ENCODE measurements at regions of chr6 and their contacts with region 1.

Region 1: GRCh38 chr6:129893640-129894039 is 32.5 kb upstream of the TMEM244 start:
- DNase-seq: no peak
- H3K4me3 ChIP-seq: no peak overlapping the region
- CTCF ChIP-seq: peak; percentile 9

Region 2: DNA sequence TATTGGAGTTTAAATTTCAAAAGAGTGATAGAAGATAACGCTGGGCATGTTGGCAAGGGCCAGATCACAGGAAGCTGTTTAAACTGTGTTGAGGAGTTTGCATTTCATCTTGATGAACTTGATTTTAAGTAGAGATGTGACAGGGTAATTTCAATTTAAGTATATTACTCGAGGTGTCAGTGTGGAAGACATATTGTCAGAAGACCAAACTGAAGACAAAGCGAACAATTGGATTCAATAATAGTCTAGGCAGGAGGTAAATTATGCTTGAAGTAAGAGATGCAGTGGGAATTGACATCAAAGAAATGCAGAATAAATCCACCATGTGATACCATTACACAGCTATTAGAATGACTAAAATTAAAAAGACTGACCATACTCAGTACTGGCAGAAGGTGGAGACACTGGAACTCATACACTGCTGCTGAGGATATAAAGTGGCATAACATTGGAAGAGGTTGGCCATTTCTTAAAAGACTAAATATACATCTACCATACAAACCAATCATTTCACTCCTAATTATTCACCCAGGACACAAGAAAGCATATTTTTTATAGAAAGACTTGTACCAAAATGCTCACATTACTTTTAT is 424.5 kb before region 1 on chr6:
- CTCF ChIA-PET with region 1: no interaction called
- POLR2A ChIA-PET with region 1: no interaction called
- DNase-seq: no peak
- H3K4me3 ChIP-seq: no peak overlapping the region
- CTCF ChIP-seq: no peak

Region 3: GRCh38 chr6:129575378-129576118 is 318.1 kb before region 1 on chr6:
- CTCF ChIA-PET with region 1: no interaction called
- POLR2A ChIA-PET with region 1: no interaction called
- DNase-seq: peak; percentile 19
- H3K4me3 ChIP-seq: no peak overlapping the region
- CTCF ChIP-seq: peak; percentile 52

Region 4: DNA sequence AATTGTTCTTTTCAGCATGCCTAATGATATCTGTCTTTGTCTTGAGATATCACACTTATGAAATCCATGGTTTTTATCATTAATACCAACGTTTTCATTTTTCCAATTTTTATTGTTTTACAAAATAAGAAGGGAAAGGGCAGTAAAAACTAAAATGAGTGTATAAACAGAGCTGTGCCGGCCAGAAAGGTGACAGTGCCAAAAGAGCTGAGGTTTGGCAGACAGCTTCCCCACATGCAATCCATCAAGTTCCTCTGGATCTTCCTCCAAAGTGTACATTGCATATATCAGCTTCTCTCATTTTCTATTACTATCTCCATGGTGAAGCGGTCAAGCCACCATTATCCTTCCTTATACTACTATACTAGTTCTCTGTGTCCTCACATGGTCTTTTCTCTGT is 22.4 kb before region 1 on chr6:
- CTCF ChIA-PET with region 1: interaction called, 13 read pairs
- POLR2A ChIA-PET with region 1: no interaction called
- DNase-seq: no peak
- H3K4me3 ChIP-seq: no peak overlapping the region
- CTCF ChIP-seq: no peak

Region 5: DNA sequence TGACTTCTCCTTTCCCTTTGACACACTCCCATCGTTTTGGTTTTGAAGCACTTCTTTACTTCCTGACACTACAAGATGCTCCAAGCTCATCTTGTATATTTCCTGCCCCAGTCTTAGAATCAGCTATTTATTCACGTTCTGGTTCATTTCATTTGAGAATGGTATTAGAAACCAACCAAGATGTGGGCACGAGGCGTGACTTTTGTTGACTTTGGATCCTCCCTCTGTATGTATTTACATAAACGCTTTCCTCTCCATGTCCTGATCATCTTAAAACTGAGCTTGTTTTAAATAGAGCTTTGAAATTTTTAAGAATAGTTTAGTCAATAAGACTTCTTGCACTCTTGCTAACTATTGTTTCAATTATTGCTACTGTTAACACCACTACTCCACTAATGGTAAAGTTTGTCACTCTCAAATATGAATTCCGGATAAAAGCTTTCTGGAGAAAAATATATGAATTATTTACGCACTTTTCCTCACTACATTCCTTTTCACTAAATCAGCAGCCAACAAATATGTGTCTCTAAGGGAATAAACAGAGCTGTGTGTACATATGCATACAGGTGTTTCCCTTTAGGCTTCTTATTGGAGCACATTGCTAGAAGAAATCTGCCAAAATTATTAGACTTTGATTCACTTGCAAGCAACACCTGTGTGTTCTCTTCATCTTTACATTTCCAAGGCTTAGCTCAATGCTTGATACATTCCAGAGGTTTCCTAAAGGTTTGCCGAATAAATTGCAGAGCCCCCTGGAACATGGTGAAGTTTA is 44.8 kb after region 1 on chr6:
- CTCF ChIA-PET with region 1: interaction called, 11 read pairs
- POLR2A ChIA-PET with region 1: no interaction called
- DNase-seq: no peak
- H3K4me3 ChIP-seq: no peak overlapping the region
- CTCF ChIP-seq: no peak

Region 6: DNA sequence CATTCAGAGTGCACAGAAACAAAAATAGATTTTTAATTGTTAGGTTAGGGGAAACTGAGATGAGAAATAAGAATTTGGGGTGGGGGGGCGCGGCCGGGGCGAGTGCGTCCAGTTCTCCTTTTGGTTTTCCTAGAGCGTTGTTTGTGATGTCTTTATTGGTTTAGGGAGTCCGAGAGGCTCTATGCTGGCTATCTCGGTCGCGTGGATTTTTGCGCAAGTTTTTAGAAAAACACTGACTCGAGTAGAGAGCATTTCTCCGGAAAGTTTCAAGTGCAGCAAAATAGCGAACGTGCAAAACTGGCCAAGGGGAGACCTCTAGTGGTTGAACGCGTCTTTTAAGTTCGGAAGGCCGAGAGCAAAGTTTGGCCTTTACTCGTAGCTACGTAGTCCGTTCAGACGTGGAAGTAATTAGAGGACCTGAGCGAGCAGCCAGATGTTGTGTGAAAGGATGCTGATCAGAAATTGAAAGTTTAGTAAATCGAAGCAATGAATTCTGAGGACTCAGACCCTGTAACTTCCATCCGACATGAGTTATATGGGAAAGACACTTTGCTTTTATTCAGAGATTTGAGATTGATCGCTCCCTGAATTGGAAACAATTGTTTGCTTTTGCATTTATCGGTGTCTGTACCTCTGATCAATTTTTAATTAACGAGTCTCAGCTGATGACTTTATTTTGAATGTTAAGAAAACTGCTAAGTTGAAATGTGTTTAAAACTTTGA is 127.4 kb after region 1 on chr6:
- CTCF ChIA-PET with region 1: interaction called, 11 read pairs
- POLR2A ChIA-PET with region 1: no interaction called
- DNase-seq: peak; percentile 75
- H3K4me3 ChIP-seq: peak overlapping the region; percentile 73
- CTCF ChIP-seq: peak; percentile 82

Measured in AG04449 (cell line).